Right cardiac atrium (tissue), 5 donors: ENCODE measurements at regions of chr5 and their contacts with region 1.

Region 1: DNA sequence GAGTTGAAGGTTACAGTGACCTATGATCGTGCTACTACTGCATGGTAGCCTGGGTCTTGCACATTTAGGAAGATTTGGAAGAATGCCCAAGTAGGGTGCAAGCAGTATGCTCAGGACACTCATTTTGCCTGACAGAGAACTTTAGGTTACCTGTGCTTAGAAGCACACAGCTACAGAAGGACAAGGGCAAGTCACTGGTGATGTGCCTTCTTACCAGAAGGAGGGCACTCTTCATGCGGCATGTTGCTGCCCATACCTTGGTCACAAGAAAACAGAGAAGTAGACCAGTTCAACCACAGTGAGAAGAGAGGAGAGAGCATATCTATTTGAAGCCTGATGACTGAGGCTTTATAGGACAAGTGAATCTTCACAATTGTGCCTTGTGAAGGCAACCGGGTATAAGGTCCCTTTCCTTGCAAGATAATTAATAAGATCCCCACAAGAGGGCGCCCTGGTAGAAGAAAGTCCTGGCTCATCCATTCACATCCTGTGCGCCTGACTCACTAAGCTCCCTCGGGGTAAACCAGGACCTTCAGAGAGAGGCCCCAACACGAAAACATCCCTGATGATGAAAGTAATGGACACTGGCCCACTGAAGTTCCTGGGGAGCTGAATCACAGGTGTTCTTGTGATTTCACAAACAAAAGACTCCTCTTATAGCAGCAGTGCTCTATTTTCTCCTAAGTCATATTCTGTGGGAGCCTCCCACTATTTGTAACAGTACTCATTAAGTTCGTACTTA is 38.1 kb upstream of the STARD4 start:
- DNase-seq: peak; percentile 67 to 77 (median 76)
- ATAC-seq: peak; percentile 93 to 94
- H3K4me3 ChIP-seq: no peak overlapping the region
- H3K27ac ChIP-seq: peak overlapping the region; percentile 43
- H3K4me1 ChIP-seq: peaks cover 4% of the 10 kb centered on the region
- H3K27me3 ChIP-seq: no peaks in the 10 kb centered on the region

Region 2: DNA sequence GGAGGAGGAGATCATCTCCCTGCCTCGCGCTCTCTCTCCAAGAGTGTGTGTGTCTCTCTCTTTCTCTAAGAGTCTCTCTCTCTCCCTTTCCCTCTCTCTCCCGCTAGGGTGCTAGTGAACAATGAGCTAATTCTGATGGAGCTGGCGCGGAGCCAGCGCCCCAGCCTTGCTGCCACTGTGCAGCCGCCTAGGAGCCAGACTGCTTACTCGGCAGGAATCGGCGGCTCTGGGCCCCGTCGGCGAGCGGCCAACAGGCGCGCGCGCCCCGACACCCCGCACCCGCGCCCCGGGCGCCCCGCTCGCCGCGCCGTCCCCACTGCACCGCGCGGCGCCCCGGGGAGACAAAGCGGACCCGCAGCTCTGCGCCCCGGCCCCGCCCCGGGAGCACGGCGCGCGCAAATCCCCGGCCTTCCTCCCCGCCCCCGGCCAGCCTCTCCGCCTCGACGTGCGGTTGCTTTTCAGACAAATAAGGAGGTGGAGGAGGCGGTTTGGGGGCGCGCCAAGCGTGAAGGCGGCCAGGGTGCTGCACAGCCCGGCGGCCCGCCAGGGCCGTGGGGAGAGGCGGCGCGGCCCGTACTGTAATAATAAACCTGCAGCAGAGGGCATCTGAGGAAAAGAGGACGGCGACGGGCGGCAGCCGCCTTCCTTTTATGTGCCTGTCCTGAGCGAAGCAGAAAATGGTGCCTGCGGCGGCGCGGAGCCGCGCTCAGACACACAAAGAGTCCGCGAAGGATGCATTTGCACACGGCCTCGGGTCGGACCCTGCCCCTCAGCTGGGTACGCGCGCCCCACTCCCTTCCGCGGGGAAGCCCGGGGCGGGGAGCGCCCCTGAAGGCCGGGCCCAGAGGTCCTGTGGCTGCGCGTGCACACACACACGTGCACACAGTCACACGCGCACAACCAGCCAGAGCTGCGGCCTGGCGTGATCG is 207.2 kb after region 1 on chr5:
- intact Hi-C with region 1: loop called in 2 of 4 experiments (anchors 5 to 10 kb)
- DNase-seq: peak; percentile 96 to 98 (median 98)
- ATAC-seq: peak; percentile 92 to 95
- H3K4me3 ChIP-seq: peak overlapping the region; percentile 88
- H3K27ac ChIP-seq: peak overlapping the region; percentile 82
- H3K4me1 ChIP-seq: no peaks in the 10 kb centered on the region
- H3K27me3 ChIP-seq: no peaks in the 10 kb centered on the region

Region 3: GRCh38 chr5:111853748-111854147 is 303.3 kb after region 1 on chr5:
- intact Hi-C with region 1: loop called in 1 of 4 experiments (anchors 10 kb)
- DNase-seq: no peak
- ATAC-seq: no peak
- H3K4me3 ChIP-seq: no peak overlapping the region
- H3K27ac ChIP-seq: no peak overlapping the region
- H3K4me1 ChIP-seq: peaks cover 7% of the 10 kb centered on the region
- H3K27me3 ChIP-seq: no peaks in the 10 kb centered on the region